ENCODE measurements at regions of chr2 and their contacts with region 1.

Region 1: GRCh38 chr2:72150157-72150865 is 2.6 kb upstream of the CYP26B1 start:
- DNase-seq: peak; percentile 71
- ATAC-seq: peak; percentile 63
- H3K4me3 Mint-ChIP-seq: peak overlapping the region; percentile 29
- H3K27ac Mint-ChIP-seq: no peak overlapping the region
- H3K4me1 Mint-ChIP-seq: peaks cover 35% of the 10 kb centered on the region
- H3K27me3 Mint-ChIP-seq: peaks cover 63% of the 10 kb centered on the region

Region 2: DNA sequence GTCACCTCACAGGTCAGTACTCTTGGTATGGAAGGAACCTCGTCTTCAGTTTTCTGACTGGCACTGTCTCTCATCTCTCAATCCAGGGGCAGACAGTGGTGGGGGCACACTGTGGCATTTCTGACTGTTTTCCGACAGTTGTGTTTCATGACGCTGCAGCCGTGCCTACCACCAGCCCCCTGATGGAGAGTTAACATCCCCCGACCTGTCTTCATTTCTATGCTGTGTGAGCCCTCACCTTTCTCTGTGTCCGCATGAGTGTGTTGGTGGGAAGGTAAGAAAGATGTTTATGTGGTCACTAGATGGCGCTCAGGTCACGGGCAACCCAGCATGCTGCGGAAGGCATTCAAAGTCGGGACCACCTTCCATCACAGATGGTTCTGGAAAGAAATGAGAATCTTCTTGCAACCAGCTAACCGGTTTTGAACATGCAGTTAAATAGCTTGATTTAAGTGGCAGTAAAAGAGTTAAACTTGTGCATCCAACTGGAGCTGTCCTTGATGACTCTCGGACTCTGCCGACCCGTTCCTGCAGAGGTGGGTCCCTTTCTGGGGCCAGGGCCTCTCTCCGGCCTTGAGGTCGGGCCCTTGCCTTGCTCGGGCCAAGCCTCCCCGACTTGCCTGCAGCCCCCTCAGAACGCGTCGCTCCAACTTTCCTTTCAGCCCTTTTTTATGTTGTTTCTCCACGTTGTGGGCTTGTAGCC is 604.6 kb before region 1 on chr2:
- CTCF ChIA-PET with region 1: interaction called, 17 read pairs
- POLR2A ChIA-PET with region 1: no interaction called
- DNase-seq: peak; percentile 67
- ATAC-seq: peak; percentile 73
- H3K4me3 Mint-ChIP-seq: peak overlapping the region; percentile 28
- H3K27ac Mint-ChIP-seq: no peak overlapping the region
- H3K4me1 Mint-ChIP-seq: peaks cover 12% of the 10 kb centered on the region
- H3K27me3 Mint-ChIP-seq: peaks cover 5% of the 10 kb centered on the region